ENCODE measurements at regions of chr1 and their contacts with region 1.

Region 1: GRCh38 chr1:40078512-40079333 is 18.3 kb downstream of the PPT1 start:
- DNase-seq: peak; percentile 74
- ATAC-seq: peak; percentile 87
- H3K4me3 ChIP-seq: no peak overlapping the region
- H3K4me3 Mint-ChIP-seq: no peak overlapping the region
- H3K27ac ChIP-seq: no peak overlapping the region
- H3K27ac Mint-ChIP-seq: no peak overlapping the region
- H3K4me1 ChIP-seq: peaks cover 10 to 21% of the 10 kb centered on the region in 2 donors
- H3K4me1 Mint-ChIP-seq: peaks cover 19% of the 10 kb centered on the region
- H3K27me3 ChIP-seq: no peaks in the 10 kb centered on the region
- H3K27me3 Mint-ChIP-seq: no peaks in the 10 kb centered on the region
- CTCF ChIP-seq: peak; percentile 93

Region 2: GRCh38 chr1:40059338-40059959 is 19.3 kb before region 1 on chr1:
- CTCF ChIA-PET with region 1: interaction called, 24 read pairs
- POLR2A ChIA-PET with region 1: no interaction called
- intact Hi-C with region 1: loop called (anchors 2 kb)
- DNase-seq: peak; percentile 59
- ATAC-seq: peak; percentile 54
- H3K4me3 ChIP-seq: peak overlapping the region in 4 of 5 experiments; percentile 16 to 45 (median 26)
- H3K4me3 Mint-ChIP-seq: peak overlapping the region; percentile 82
- H3K27ac ChIP-seq: peak overlapping the region; percentile 43 to 82
- H3K27ac Mint-ChIP-seq: peak overlapping the region; percentile 89
- H3K4me1 ChIP-seq: peaks cover 96 to 98% of the 10 kb centered on the region in 2 donors
- H3K4me1 Mint-ChIP-seq: peaks cover 90% of the 10 kb centered on the region
- H3K27me3 ChIP-seq: no peaks in the 10 kb centered on the region
- H3K27me3 Mint-ChIP-seq: no peaks in the 10 kb centered on the region
- CTCF ChIP-seq: no peak

Region 3: GRCh38 chr1:40064797-40065499 is 13.8 kb before region 1 on chr1:
- CTCF ChIA-PET with region 1: interaction called, 24 read pairs
- POLR2A ChIA-PET with region 1: interaction called, 3 read pairs
- intact Hi-C with region 1: loop called (anchors 2 kb)
- DNase-seq: peak; percentile 84
- ATAC-seq: peak; percentile 91
- H3K4me3 ChIP-seq: peak overlapping the region in 4 of 5 experiments; percentile 9 to 30 (median 17)
- H3K4me3 Mint-ChIP-seq: peak overlapping the region; percentile 77
- H3K27ac ChIP-seq: peak overlapping the region; percentile 77 to 87
- H3K27ac Mint-ChIP-seq: peak overlapping the region; percentile 96
- H3K4me1 ChIP-seq: peaks cover 67 to 68% of the 10 kb centered on the region in 2 donors
- H3K4me1 Mint-ChIP-seq: peaks cover 63% of the 10 kb centered on the region
- H3K27me3 ChIP-seq: no peaks in the 10 kb centered on the region
- H3K27me3 Mint-ChIP-seq: no peaks in the 10 kb centered on the region
- CTCF ChIP-seq: no peak

Region 4: GRCh38 chr1:40096977-40097782 is 18.5 kb after region 1 on chr1 and contains the start of gene PPT1:
- CTCF ChIA-PET with region 1: interaction called, 10 read pairs
- POLR2A ChIA-PET with region 1: no interaction called
- intact Hi-C with region 1: no loop called
- DNase-seq: peak; percentile 86
- ATAC-seq: peak; percentile 92
- H3K4me3 ChIP-seq: peak within 1 kb of the TSS; percentile 69 to 80 (median 79)
- H3K4me3 Mint-ChIP-seq: peak within 1 kb of the TSS; percentile 88
- H3K27ac ChIP-seq: peak within 1 kb of the TSS; percentile 53 to 68
- H3K27ac Mint-ChIP-seq: peak within 1 kb of the TSS; percentile 92
- H3K4me1 ChIP-seq: peaks cover 14 to 20% of the 10 kb centered on the region in 2 donors
- H3K4me1 Mint-ChIP-seq: peaks cover 19% of the 10 kb centered on the region
- H3K27me3 ChIP-seq: no peaks in the 10 kb centered on the region
- H3K27me3 Mint-ChIP-seq: peaks cover 15% of the 10 kb centered on the region
- CTCF ChIP-seq: peak; percentile 61
- total RNA-seq, gene PPT1: 32.1 and 38.2 TPM in 2 replicates

Region 5: DNA sequence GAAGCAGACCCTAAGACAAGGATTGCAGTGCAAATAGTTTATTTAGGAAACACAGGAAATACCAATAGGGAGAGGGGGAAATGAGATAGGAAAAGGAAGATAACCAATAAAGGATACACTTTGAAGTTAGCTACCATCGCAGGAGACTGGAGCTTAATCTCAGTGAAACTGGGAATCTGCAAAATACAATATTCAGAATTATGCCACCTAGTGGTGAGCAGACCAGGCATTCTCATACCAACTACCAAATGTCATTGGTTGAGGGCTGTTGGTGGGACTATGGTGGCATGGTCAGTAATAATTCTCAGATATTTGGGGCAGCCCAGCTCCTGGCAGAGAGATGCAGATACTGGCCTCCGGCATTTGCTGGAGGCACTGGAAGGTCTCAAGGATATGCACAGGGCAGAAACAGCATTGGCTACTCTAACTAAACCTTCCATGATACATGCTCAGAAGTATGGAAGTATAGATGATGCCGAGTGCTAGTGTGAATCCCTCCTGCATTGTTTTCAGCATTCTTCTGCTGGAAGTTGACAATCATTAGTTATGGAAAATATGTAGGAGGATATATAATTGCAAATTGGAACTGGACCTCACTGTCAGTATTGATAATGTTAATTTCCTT is 359.8 kb after region 1 on chr1:
- CTCF ChIA-PET with region 1: interaction called, 11 read pairs
- POLR2A ChIA-PET with region 1: no interaction called
- intact Hi-C with region 1: no loop called
- DNase-seq: peak; percentile 63
- ATAC-seq: peak; percentile 64
- H3K4me3 ChIP-seq: no peak overlapping the region
- H3K4me3 Mint-ChIP-seq: no peak overlapping the region
- H3K27ac ChIP-seq: no peak overlapping the region
- H3K27ac Mint-ChIP-seq: no peak overlapping the region
- H3K4me1 ChIP-seq: no peaks in the 10 kb centered on the region
- H3K4me1 Mint-ChIP-seq: peaks cover 2% of the 10 kb centered on the region
- H3K27me3 ChIP-seq: no peaks in the 10 kb centered on the region
- H3K27me3 Mint-ChIP-seq: no peaks in the 10 kb centered on the region
- CTCF ChIP-seq: peak; percentile 83

Measured in B cell (primary cell).